ENCODE measurements at regions of chr12 and their contacts with region 1.

Region 1: DNA sequence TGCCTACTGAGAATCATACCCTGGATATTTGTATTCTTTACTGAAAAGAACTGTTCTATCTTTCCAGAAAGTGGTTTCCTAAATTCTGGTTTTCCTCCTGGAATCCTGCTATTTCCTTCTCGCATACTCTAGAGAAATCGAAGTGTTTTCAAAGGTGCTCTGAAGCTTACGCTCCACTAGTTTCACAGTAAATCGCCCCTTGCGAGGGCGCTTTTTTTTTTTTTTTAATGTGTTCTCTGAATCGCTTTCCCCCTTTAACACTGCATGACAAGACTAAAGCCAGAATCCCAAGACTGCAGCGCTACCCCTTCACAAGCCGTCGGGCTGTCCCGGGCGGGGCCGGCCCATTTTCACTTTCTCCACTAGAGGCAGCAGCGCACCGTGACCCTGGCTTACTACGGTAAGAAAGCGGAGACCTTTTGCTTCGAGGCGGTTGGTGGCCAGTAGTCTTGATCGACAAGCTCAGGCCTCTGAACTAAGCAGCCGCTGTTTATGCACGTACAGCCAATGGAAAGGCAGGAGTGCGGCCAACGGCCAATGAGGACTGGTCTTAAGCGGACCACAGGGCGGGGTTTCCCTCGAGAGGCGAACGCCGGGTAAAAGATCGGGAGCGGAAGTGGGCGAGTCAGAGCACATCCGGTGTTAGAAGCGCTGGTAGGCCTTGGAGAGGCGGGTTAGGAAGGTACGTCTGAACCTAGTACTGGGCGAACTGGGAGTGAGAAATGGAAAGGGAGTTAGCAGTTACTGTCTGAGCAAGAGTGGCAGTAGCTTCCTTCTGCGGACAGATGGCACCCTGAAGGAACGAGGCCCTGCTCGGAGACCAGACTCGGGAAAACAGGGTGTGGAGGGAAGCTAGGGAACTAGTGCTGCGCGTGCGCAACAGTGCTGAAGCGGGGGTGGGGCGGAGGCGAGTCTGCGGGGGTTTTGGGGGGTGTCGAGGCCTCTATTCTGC is at the start of gene TMBIM6:
- DNase-seq: peak; percentile 96 to 100 (median 98)
- ATAC-seq: peak; percentile 86
- H3K4me3 ChIP-seq: peak within 1 kb of the TSS; percentile 83
- H3K4me3 Mint-ChIP-seq: peak within 1 kb of the TSS; percentile 92
- H3K27ac ChIP-seq: peak within 1 kb of the TSS; percentile 99
- H3K27ac Mint-ChIP-seq: peak within 1 kb of the TSS; percentile 96
- H3K4me1 ChIP-seq: peaks cover 40% of the 10 kb centered on the region
- H3K4me1 Mint-ChIP-seq: peaks cover 47% of the 10 kb centered on the region
- H3K27me3 ChIP-seq: no peaks in the 10 kb centered on the region
- H3K27me3 Mint-ChIP-seq: no peaks in the 10 kb centered on the region
- CTCF ChIP-seq: peak; percentile 83
- total RNA-seq, gene TMBIM6: 274 to 279 TPM

Region 2: GRCh38 chr12:49567611-49568441 is 173.4 kb before region 1 on chr12 and contains the start of gene MCRS1:
- CTCF ChIA-PET with region 1: no interaction called
- POLR2A ChIA-PET with region 1: interaction called, 5 read pairs
- intact Hi-C with region 1: loop called in 1 of 2 experiments (anchors 5 kb)
- DNase-seq: peak; percentile 82 to 95 (median 88)
- ATAC-seq: peak; percentile 85
- H3K4me3 ChIP-seq: peak within 1 kb of the TSS; percentile 67
- H3K4me3 Mint-ChIP-seq: peak within 1 kb of the TSS; percentile 97
- H3K27ac ChIP-seq: peak within 1 kb of the TSS; percentile 93 to 94
- H3K27ac Mint-ChIP-seq: peak within 1 kb of the TSS; percentile 99
- H3K4me1 ChIP-seq: peaks cover 49% of the 10 kb centered on the region
- H3K4me1 Mint-ChIP-seq: peaks cover 71% of the 10 kb centered on the region
- H3K27me3 ChIP-seq: no peaks in the 10 kb centered on the region
- H3K27me3 Mint-ChIP-seq: no peaks in the 10 kb centered on the region
- CTCF ChIP-seq: no peak
- total RNA-seq, gene MCRS1: 49.0 to 56.4 TPM

Region 3: DNA sequence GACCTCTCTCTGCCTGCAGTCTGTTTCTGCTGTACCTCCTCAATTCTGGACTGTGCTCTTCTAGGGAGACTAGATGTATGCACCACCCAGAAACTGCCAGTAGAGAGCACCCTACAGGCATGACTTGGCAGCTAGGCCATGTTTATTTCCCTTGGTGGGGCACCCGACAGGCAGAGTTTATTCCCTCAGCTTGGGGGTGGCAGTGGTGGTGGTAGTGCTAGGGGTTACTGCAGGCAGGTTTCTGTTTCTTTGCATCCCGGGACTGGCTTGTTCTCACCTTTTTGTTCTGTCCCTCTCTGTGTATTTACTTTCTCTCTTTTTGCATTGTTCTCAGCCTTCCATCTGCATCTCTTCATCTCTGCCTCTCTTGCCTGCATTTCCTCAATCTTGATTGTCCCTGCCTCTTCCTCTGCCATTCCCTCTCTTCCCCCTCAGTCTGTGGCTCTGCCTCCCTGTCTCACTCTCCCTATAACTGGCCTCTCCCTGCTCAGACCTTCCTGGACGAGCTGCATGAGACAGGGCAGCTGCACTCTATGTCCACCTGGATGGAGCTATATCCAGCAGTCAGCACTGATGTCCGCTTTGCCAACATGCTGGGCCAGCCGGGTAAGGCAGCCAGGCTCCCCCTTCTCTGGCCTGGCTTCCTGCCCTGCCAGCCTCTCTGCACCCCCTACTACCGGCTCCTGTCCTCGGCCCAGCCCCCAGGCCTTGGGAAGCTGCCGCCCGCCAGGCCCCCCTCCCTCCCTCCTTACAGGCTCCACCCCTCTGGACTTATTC is 104.0 kb before region 1 on chr12:
- CTCF ChIA-PET with region 1: interaction called, 12 read pairs
- POLR2A ChIA-PET with region 1: interaction called, 5 read pairs
- intact Hi-C with region 1: no loop called
- DNase-seq: peak; percentile 31 to 79 (median 47)
- ATAC-seq: peak; percentile 99
- H3K4me3 ChIP-seq: no peak overlapping the region
- H3K4me3 Mint-ChIP-seq: no peak overlapping the region
- H3K27ac ChIP-seq: no peak overlapping the region
- H3K27ac Mint-ChIP-seq: peak overlapping the region; percentile 2
- H3K4me1 ChIP-seq: peaks cover 19% of the 10 kb centered on the region
- H3K4me1 Mint-ChIP-seq: peaks cover 25% of the 10 kb centered on the region
- H3K27me3 ChIP-seq: no peaks in the 10 kb centered on the region
- H3K27me3 Mint-ChIP-seq: no peaks in the 10 kb centered on the region
- CTCF ChIP-seq: peak; percentile 54

Region 4: DNA sequence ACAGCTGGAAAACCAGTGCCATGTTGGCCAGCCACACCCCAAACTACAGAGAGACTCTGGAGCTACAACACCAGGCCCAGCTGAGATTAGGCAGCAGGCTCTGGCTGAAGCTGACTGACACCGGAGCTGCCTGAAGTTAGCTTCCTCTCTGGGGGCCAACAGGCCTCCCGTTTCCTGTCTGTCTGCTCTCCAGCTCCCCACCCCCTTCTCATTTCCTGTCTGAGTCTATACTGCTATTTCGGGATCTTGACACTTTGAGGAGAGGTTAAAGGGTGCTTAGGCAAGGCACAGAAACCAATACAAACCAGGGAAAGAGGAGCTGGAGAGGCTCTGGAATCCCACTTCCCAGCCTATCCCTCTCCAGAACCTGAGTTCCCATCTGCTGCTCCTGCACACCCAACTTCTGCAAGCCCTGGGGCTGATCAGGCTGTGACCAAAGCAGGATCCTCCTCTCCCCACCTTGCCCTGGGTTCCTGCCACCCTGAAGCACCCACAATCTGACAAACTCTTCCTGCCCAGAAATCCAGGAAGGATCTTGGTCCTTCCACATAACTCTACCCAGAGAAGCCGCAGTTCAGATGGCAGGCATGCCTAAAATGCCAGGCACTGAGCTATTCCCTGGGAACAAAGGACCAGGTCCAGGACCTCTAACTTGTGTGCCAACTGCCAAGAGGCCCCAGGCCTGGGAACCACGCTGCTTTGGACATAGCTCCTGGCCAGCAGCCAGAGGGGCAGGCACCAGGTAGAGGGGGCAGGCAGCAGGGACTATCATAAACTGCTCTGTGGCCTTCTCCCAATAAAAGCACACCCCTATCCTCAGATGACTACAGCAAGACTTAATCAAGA is 78.0 kb before region 1 on chr12:
- CTCF ChIA-PET with region 1: interaction called, 6 read pairs
- POLR2A ChIA-PET with region 1: interaction called, 14 read pairs
- intact Hi-C with region 1: no loop called
- DNase-seq: peak; percentile 53 to 91 (median 74)
- ATAC-seq: peak; percentile 97
- H3K4me3 ChIP-seq: peak overlapping the region; percentile 10
- H3K4me3 Mint-ChIP-seq: peak overlapping the region; percentile 90
- H3K27ac ChIP-seq: peak overlapping the region; percentile 88 to 97
- H3K27ac Mint-ChIP-seq: peak overlapping the region; percentile 97
- H3K4me1 ChIP-seq: peaks cover 65% of the 10 kb centered on the region
- H3K4me1 Mint-ChIP-seq: peaks cover 83% of the 10 kb centered on the region
- H3K27me3 ChIP-seq: no peaks in the 10 kb centered on the region
- H3K27me3 Mint-ChIP-seq: no peaks in the 10 kb centered on the region
- CTCF ChIP-seq: no peak

Region 5: DNA sequence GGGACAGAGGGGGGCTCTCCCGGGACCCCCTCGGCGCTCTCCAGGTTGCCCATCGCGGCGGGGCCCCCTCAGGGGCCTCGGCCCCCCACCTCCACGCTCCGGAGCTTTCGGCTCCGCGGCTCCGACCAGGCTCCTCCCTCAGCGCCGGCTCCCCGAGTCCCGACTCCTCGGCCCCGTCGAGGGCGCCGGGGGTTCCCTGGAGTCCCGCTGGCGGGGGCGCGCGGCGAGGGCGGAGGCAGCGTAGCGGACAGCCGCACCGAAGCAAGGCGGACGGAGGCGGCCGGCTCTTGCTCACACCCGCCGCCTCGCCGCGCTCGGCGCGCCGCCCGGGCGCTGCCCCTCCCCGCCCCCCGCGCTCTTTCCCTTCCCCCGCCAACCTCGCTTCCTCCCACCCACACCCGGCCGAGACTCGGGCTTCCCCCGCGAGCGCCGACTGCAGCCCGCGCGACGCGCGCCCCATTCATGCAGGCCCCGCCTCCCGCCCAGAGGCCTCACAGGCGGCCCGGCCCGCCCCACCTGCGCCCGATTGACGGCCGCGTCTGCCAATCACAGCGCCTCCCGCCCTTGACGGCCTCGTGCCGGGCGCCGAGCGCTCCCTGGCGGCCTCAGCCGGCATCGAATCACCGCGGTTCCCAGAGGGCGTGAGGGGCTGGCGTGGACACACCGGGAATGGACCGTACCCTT is 33.9 kb before region 1 on chr12 and contains the start of gene FMNL3:
- CTCF ChIA-PET with region 1: interaction called, 7 read pairs
- POLR2A ChIA-PET with region 1: interaction called, 12 read pairs
- intact Hi-C with region 1: loop called in 1 of 2 experiments (anchors 2 kb)
- DNase-seq: peak; percentile 97 to 100 (median 99)
- ATAC-seq: peak; percentile 95
- H3K4me3 ChIP-seq: peak within 1 kb of the TSS; percentile 85
- H3K4me3 Mint-ChIP-seq: peak within 1 kb of the TSS; percentile 94
- H3K27ac ChIP-seq: peak within 1 kb of the TSS; percentile 39 to 82
- H3K27ac Mint-ChIP-seq: peak within 1 kb of the TSS; percentile 78
- H3K4me1 ChIP-seq: peaks cover 42% of the 10 kb centered on the region
- H3K4me1 Mint-ChIP-seq: peaks cover 45% of the 10 kb centered on the region
- H3K27me3 ChIP-seq: no peaks in the 10 kb centered on the region
- H3K27me3 Mint-ChIP-seq: peaks cover 4% of the 10 kb centered on the region
- CTCF ChIP-seq: peak; percentile 93
- total RNA-seq, gene FMNL3: 33.3 to 34.8 TPM

Region 6: GRCh38 chr12:49776413-49776812 is 35.2 kb after region 1 on chr12:
- CTCF ChIA-PET with region 1: interaction called, 46 read pairs
- POLR2A ChIA-PET with region 1: interaction called, 32 read pairs
- intact Hi-C with region 1: loop called (anchors 1 to 2 kb)
- DNase-seq: peak in 13 of 14 experiments; percentile 14 to 77 (median 37)
- ATAC-seq: peak; percentile 73
- H3K4me3 ChIP-seq: no peak overlapping the region
- H3K4me3 Mint-ChIP-seq: no peak overlapping the region
- H3K27ac ChIP-seq: no peak overlapping the region
- H3K27ac Mint-ChIP-seq: no peak overlapping the region
- H3K4me1 ChIP-seq: peaks cover 13% of the 10 kb centered on the region
- H3K4me1 Mint-ChIP-seq: peaks cover 10% of the 10 kb centered on the region
- H3K27me3 ChIP-seq: peaks cover 0 to 3% of the 10 kb centered on the region in 2 experiments
- H3K27me3 Mint-ChIP-seq: peaks cover 25% of the 10 kb centered on the region
- CTCF ChIP-seq: peak; percentile 52

Region 7: DNA sequence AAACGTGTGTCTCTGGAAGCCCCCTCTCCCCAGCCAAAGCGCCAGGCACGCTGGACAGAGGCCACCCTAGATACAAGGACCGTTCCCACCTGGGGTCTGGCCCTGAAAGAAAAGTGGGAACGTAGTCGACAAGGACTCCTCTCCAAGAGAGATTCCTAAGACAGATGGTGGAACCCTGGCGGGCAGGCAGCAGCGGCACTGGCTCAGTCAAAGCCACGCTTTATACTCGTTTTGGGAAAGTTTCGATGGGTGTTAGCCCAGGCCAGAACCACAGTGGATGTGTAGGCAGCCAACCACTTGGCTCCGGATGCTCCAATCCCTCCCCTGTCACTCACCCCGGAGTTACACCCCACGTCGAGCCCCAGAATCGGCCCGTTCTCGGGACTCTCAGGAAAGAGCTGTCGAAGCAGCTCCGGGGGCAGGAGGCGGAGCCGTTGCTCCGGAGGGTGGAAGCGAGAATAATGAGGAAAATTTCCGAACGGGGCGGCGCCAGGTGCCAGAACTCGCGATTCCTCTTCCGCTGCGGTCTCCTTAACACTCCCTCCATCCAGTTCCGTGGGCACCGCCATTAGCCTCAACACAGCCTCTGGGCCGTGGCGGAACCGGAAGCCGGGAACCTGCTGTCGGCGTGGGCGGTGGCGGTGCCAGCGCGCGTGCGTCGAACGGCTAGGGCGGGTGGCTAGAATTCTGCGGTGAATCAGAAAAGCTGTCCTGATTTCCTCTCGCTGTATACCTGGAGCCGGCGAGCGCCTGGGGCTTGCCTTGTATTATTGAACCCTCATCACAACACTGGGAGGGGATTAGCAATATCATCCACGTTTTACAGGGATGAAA is 101.5 kb after region 1 on chr12 and contains the start of gene BCDIN3D:
- CTCF ChIA-PET with region 1: interaction called, 22 read pairs
- POLR2A ChIA-PET with region 1: interaction called, 33 read pairs
- intact Hi-C with region 1: loop called in 1 of 2 experiments (anchors 1 kb)
- DNase-seq: peak; percentile 86 to 97 (median 90)
- ATAC-seq: peak; percentile 90
- H3K4me3 ChIP-seq: peak within 1 kb of the TSS; percentile 83
- H3K4me3 Mint-ChIP-seq: peak within 1 kb of the TSS; percentile 90
- H3K27ac ChIP-seq: peak within 1 kb of the TSS; percentile 80 to 85
- H3K27ac Mint-ChIP-seq: peak within 1 kb of the TSS; percentile 88
- H3K4me1 ChIP-seq: peaks cover 34% of the 10 kb centered on the region
- H3K4me1 Mint-ChIP-seq: peaks cover 43% of the 10 kb centered on the region
- H3K27me3 ChIP-seq: no peaks in the 10 kb centered on the region
- H3K27me3 Mint-ChIP-seq: no peaks in the 10 kb centered on the region
- CTCF ChIP-seq: no peak
- total RNA-seq, gene BCDIN3D: 2.8 to 3.9 TPM